ENCODE measurements at regions of chr7 and their contacts with region 1.

Region 1: GRCh38 chr7:17844514-17845196 is 95.6 kb downstream of the SNX13 start:
- DNase-seq: no peak
- H3K4me3 Mint-ChIP-seq: no peak overlapping the region
- H3K27ac Mint-ChIP-seq: no peak overlapping the region
- H3K4me1 Mint-ChIP-seq: peaks cover 17% of the 10 kb centered on the region
- H3K27me3 Mint-ChIP-seq: no peaks in the 10 kb centered on the region

Region 2: DNA sequence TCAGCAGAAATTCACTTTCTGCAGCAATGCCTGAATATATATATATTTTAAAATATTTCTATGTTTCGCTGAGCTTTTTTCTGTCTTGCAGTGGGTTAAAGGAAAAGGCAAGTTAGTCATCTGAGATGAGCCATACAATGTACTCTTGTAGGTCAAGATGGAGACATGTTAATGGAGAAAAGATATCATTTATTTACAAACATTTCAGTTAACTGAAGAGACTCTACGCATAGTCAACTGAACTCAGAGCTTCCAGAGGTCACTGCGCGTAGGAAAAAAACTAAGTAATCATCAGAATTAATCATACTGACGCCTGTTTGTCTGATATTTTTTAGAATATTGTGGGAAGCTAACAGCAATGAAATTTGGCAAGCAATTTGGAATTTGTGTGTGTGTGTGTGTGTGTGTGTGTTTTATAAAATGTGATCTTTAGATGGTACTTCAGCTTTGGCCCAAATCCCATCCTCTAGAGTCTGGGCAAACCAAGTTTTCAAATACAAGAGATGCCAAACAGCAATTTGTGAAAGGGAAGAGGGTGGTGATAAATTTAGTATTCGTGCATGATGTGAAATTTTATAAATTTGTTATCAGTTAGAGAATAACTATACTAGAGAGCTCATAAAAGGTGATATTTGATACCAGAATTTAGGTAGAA is 768.9 kb before region 1 on chr7:
- CTCF ChIA-PET with region 1: no interaction called
- intact Hi-C with region 1: no loop called
- DNase-seq: no peak
- H3K4me3 Mint-ChIP-seq: no peak overlapping the region
- H3K27ac Mint-ChIP-seq: no peak overlapping the region
- H3K4me1 Mint-ChIP-seq: no peaks in the 10 kb centered on the region
- H3K27me3 Mint-ChIP-seq: no peaks in the 10 kb centered on the region

Region 3: GRCh38 chr7:17745610-17746009 is 99.0 kb before region 1 on chr7:
- CTCF ChIA-PET with region 1: no interaction called
- intact Hi-C with region 1: no loop called
- DNase-seq: no peak
- H3K4me3 Mint-ChIP-seq: no peak overlapping the region
- H3K27ac Mint-ChIP-seq: no peak overlapping the region
- H3K4me1 Mint-ChIP-seq: no peaks in the 10 kb centered on the region
- H3K27me3 Mint-ChIP-seq: no peaks in the 10 kb centered on the region

Region 4: GRCh38 chr7:17829034-17829433 is 15.6 kb before region 1 on chr7:
- CTCF ChIA-PET with region 1: interaction called, 3 read pairs
- intact Hi-C with region 1: loop called (anchors 2 kb)
- DNase-seq: no peak
- H3K4me3 Mint-ChIP-seq: no peak overlapping the region
- H3K27ac Mint-ChIP-seq: no peak overlapping the region
- H3K4me1 Mint-ChIP-seq: no peaks in the 10 kb centered on the region
- H3K27me3 Mint-ChIP-seq: no peaks in the 10 kb centered on the region

Measured in activated naive CD4-positive, alpha-beta T cell treated with anti-CD3 and anti-CD28 coated beads for 36 hours (primary cell).